ENCODE measurements at regions of chr11 and their contacts with region 1.

Region 1: DNA sequence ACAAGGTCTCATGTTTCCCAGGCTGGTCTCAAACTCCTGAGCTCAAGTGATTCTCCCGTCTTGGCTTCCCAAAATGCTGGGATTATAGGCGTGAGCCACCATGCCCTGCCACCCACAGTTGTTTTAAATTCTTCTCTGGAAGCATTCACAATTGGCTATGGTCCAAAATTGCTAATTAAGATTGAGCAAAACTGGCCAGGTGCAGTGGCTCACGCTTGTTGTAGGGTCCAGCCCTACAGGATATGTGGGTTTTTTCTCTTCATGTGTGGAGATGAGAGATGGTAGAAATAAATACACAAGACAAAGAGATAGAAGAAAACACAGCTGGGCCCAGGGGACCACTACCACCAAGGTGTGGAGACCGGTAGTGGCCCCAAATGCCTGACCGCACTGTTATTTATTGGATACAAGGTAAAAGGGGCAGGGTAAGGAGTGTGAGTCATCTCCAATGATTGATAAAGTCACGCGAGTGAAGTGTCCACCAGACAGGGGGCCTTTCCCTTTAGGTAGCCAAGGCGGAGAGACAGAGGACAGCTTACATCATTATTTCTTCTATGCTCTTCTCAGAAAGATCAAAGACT is 8.3 kb upstream of the ACY3 start:
- DNase-seq: no peak
- H3K4me3 ChIP-seq: no peak overlapping the region
- H3K27ac ChIP-seq: no peak overlapping the region
- H3K4me1 ChIP-seq: no peaks in the 10 kb centered on the region
- H3K27me3 ChIP-seq: no peaks in the 10 kb centered on the region
- CTCF ChIP-seq: no peak
- EP300 ChIP-seq: no peak
- POLR2A ChIP-seq: no peak
- RAD21 ChIP-seq: no peak

Region 2: DNA sequence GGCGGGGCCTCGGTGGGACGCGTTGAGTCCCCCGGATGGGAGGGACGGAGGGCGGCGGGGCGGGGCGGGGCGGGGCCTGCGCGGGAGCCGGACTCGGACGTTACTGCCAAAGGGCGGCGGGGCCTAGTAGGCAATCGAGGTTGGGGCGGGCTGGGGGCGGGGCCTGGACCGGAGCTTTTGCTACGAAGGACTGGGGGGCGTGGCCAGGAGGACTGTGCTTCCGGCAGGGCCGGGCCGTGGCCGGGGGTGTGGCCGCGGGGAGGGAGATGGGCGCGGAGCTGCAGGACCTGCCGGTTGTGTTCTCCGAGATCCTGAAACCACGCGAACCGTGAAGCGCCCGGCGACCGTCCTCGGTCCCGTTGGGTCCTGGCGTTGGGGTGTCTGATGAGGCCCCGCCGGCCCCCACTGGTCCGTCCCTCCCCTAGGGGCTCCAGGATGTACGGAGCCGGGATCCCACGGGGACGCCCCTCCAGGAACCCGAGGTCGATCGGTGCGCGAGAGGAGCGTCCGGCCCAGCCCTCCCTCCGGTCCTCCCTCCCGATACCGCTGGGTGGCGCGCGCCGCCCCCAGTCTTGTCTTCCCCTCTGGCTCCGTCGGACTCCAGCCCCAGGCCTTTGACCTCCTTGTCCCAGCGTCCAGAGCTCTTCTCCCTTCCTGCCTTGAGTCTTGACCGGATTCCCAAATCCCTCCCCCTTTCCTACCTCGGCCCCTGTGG is 28.4 kb before region 1 on chr11:
- CTCF ChIA-PET with region 1: interaction called, 13 read pairs
- POLR2A ChIA-PET with region 1: interaction called, 5 read pairs
- DNase-seq: peak; percentile 95 to 98
- H3K4me3 ChIP-seq: peak overlapping the region; percentile 51 to 84 (median 78)
- H3K27ac ChIP-seq: peak overlapping the region; percentile 35; the same call in 1 of the 2 replicates
- H3K4me1 ChIP-seq: peaks cover 0 to 29% (median 18%) of the 10 kb centered on the region in 4 experiments; a peak in 6 of 7 replicates
- H3K27me3 ChIP-seq: no peaks in the 10 kb centered on the region; a peak in 1 of 7 replicates
- CTCF ChIP-seq: peak in 2 of 3 experiments; percentile 74 to 79; a peak in 3 of 4 replicates
- EP300 ChIP-seq: no peak
- POLR2A ChIP-seq: peak in 1 of 2 experiments; percentile 91; a peak in 2 of 3 replicates
- RAD21 ChIP-seq: peak; percentile 60 to 70

Region 3: DNA sequence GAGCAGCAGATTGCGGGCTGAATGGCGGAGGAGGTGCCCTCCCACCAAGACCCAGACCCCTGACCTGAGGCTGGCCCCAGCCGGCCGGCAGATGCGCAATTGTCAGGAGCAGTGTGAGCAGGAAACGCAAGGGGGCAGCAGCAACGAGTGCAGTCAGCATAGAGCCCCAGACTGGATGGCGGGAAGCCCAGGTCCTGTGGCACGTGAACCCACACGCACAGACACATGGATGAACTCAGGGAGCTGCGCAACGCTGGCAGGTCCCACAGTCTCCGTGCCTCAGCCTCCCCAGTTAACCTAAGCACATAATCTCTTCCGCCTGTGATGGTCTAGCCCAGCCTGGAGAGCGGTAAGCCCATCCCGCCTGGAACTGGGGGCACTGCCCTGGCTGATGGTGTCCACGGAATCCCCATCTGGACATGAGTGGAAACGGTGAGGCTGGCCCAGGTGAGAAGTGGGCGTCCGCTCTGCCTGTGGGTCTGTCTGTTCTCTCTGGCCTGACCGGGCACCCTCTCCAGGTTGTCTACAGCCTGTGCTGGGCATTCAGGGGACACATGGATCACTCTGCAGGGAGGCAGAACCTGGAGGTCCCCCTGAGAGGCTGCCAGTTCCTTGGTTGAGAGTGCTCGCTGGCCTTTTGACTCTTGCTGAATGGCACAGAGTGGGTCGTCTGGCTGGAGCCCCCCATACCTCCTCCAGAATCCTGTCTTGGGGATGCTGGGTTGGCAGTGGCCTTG is 18.6 kb before region 1 on chr11:
- CTCF ChIA-PET with region 1: interaction called, 74 read pairs
- POLR2A ChIA-PET with region 1: no interaction called
- DNase-seq: peak in 1 of 2 experiments; percentile 89
- H3K4me3 ChIP-seq: no peak overlapping the region
- H3K27ac ChIP-seq: no peak overlapping the region
- H3K4me1 ChIP-seq: peaks cover 0 to 2% (median under 1%) of the 10 kb centered on the region in 4 experiments; a peak in 1 of 7 replicates
- H3K27me3 ChIP-seq: peaks cover 8 to 28% (median 15%) of the 10 kb centered on the region in 4 experiments
- CTCF ChIP-seq: peak in 2 of 3 experiments; percentile 85 to 93; a peak in 3 of 4 replicates
- EP300 ChIP-seq: no peak
- POLR2A ChIP-seq: no peak
- RAD21 ChIP-seq: peak; percentile 70 to 73

Region 4: DNA sequence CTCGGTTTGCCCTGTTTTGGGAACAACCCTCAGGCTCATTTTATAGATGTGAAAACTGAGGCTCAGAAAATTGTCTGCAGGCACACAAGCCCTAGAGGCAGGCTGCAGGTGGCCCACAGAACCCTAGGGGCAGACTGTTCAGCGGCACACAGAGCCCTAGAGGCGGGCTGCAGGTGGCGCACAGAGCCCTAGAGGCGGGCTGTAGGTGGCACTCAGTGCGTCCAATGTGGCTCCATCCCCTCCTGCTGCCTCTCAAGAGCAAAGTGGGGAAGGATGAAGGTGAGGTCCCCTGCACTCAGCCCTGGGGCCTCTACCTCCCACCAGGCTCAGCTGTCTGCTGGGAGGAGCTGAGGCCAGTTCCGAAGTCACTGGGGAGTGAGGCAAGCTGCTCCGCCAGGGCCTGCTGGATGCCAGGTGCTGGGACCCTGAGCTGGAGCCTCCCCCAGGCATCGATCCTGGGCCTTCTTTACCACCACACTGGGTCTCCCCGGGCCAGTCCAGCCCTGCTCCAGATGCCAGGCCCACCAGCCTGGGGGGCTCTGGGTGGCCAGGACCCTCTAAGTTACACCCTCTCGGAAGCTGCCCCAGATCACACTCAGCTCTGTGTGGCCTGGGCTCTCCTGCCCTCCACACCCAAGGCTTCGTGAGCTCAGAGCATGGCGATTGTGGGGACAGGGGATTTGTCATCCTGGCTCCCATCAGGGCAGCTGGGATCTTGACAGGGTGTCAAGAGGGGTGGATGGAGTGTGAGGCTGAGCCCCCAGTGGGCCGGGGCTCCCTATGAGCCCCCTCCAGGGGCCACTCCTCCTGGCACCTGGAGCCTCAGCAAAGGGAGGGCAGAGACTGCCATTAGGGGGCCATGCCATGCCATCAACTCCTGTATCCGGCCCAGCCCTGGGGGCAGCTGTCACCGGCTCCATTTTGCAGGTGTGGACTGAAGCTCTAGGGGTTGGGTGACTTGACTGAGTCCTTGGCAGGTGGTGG is 10.3 kb before region 1 on chr11:
- CTCF ChIA-PET with region 1: interaction called, 74 read pairs
- POLR2A ChIA-PET with region 1: no interaction called
- DNase-seq: peak in 1 of 2 experiments; percentile 64
- H3K4me3 ChIP-seq: no peak overlapping the region
- H3K27ac ChIP-seq: no peak overlapping the region
- H3K4me1 ChIP-seq: peaks cover 0 to 9% (median 0%) of the 10 kb centered on the region in 4 experiments; a peak in 2 of 7 replicates
- H3K27me3 ChIP-seq: no peaks in the 10 kb centered on the region; a peak in 2 of 7 replicates
- CTCF ChIP-seq: peak in 2 of 3 experiments; percentile 73 to 98; a peak in 3 of 4 replicates
- EP300 ChIP-seq: no peak
- POLR2A ChIP-seq: no peak
- RAD21 ChIP-seq: peak; percentile 58 to 68

Region 5: DNA sequence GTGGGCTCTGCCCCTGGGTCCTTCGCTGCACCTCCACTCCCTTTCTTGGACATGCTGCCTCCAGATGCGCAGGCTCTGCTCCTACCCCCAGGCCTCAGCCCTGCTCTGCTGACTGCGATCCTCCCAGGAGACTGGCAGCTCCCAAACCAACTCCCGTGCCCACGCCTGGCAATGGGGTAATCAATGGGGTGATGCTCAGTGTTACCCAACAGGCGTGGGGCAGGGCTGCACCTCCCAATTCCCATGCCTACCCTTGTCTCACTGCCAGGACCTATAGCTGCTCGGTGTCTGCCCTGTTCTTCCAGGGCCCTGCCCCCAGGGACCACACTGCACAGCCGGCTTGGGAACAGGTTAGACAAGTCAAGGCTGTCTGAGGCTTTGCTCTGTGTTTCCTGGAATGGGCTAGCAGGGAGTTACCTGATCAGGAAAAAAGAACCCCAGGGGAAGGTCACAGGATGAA is 15.7 kb after region 1 on chr11 and contains the start of gene ALDH3B2:
- CTCF ChIA-PET with region 1: interaction called, 10 read pairs
- POLR2A ChIA-PET with region 1: no interaction called
- DNase-seq: peak in 1 of 2 experiments; percentile 48
- H3K4me3 ChIP-seq: no peak within 1 kb of the TSS
- H3K27ac ChIP-seq: no peak within 1 kb of the TSS
- H3K4me1 ChIP-seq: peaks cover 0 to 5% (median 0%) of the 10 kb centered on the region in 4 experiments; a peak in 3 of 7 replicates
- H3K27me3 ChIP-seq: no peaks in the 10 kb centered on the region
- CTCF ChIP-seq: no peak
- EP300 ChIP-seq: no peak
- POLR2A ChIP-seq: no peak
- RAD21 ChIP-seq: no peak
- total RNA-seq, gene ALDH3B2: not detected in 2 replicates

Region 6: DNA sequence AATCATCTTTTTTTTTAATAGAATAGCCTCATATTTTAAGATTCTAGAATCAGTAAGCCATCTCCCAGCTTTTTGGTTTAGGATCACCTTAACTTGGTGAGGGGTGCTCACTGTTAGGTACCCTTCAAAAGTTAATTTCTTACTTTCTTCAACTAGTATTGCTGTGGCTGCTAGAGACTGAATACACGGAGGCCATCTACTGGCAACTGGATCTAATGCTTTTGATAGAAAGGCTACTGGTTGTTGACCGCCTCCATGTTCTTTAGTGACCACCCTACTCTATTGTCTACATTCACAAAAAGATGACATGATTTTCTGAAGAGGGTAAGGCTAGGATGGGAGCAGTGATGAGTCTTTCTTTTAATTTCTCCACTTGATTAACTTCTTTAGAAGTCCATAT is 32.4 kb after region 1 on chr11:
- CTCF ChIA-PET with region 1: interaction called, 15 read pairs
- POLR2A ChIA-PET with region 1: no interaction called
- DNase-seq: no peak
- H3K4me3 ChIP-seq: no peak overlapping the region
- H3K27ac ChIP-seq: no peak overlapping the region
- H3K4me1 ChIP-seq: no peaks in the 10 kb centered on the region
- H3K27me3 ChIP-seq: no peaks in the 10 kb centered on the region; a peak in 2 of 7 replicates
- CTCF ChIP-seq: peak in 2 of 3 experiments; percentile 17 to 41; a peak in 2 of 4 replicates
- EP300 ChIP-seq: no peak
- POLR2A ChIP-seq: no peak
- RAD21 ChIP-seq: peak; percentile 38 to 54; a peak in 3 of 4 replicates